Naive thymus-derived CD4-positive, alpha-beta T cell (primary cell): ENCODE measurements at regions of chr9 and their contacts with region 1.

Region 1: DNA sequence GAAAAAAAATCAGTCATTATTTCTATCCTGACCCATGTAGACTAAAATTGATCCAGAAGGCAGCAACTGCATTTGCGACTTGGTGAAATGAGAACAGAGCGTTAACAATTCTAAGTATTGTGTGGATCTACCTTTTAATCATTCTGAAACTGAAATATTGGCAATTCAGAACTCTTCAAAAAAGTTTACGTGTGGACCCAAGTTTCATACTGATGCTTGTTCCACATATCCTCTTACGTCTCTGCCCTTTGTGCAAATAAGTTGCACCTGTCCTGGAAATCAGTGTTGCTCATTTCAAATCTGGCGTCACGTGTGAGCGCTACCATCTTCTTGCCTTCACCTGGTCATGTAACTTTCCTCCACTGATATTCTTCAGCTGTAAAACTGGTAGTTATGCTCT is 74.7 kb downstream of the NTRK2 start:
- DNase-seq: no peak
- ATAC-seq: no peak
- H3K4me3 ChIP-seq: no peak overlapping the region
- H3K4me3 Mint-ChIP-seq: no peak overlapping the region
- H3K27ac ChIP-seq: no peak overlapping the region
- H3K27ac Mint-ChIP-seq: no peak overlapping the region
- H3K4me1 ChIP-seq: no peaks in the 10 kb centered on the region
- H3K4me1 Mint-ChIP-seq: no peaks in the 10 kb centered on the region
- H3K27me3 ChIP-seq: no peaks in the 10 kb centered on the region
- H3K27me3 Mint-ChIP-seq: peaks cover 0 to 6% (median 1%) of the 10 kb centered on the region in 5 donors

Region 2: DNA sequence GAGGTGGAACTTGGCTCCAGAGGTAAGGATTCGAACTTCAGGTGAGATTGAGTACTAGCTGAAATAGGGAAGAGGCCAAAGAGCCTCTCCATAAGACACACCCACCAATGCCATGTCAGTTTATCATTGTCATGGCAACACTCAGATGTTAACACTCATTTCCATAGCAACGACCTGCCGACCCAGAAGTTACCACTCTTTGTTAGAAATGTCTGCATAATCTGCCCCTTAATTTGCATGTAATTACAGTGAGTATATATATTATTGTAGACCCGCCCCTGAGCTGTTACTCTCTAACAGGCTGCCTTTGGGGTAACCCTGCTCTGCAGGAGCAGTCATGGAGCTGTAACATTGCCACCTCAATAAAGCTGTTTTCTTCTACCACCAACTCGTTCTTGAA is 84.9 kb before region 1 on chr9:
- CTCF ChIA-PET with region 1: no interaction called
- POLR2A ChIA-PET with region 1: no interaction called
- intact Hi-C with region 1: no loop called
- DNase-seq: no peak
- ATAC-seq: no peak
- H3K4me3 ChIP-seq: no peak overlapping the region
- H3K4me3 Mint-ChIP-seq: no peak overlapping the region
- H3K27ac ChIP-seq: no peak overlapping the region
- H3K27ac Mint-ChIP-seq: no peak overlapping the region
- H3K4me1 ChIP-seq: no peaks in the 10 kb centered on the region
- H3K4me1 Mint-ChIP-seq: no peaks in the 10 kb centered on the region
- H3K27me3 ChIP-seq: no peaks in the 10 kb centered on the region
- H3K27me3 Mint-ChIP-seq: peaks cover 7 to 13% (median 12%) of the 10 kb centered on the region in 5 donors

Region 3: GRCh38 chr9:84697509-84698114 is 46.6 kb before region 1 on chr9:
- CTCF ChIA-PET with region 1: no interaction called
- POLR2A ChIA-PET with region 1: no interaction called
- intact Hi-C with region 1: no loop called
- DNase-seq: peak in 2 of 9 donors; percentile 6 to 57
- ATAC-seq: no peak
- H3K4me3 ChIP-seq: no peak overlapping the region
- H3K4me3 Mint-ChIP-seq: no peak overlapping the region
- H3K27ac ChIP-seq: no peak overlapping the region
- H3K27ac Mint-ChIP-seq: no peak overlapping the region
- H3K4me1 ChIP-seq: no peaks in the 10 kb centered on the region
- H3K4me1 Mint-ChIP-seq: peaks cover 0 to 9% (median 0%) of the 10 kb centered on the region in 7 donors
- H3K27me3 ChIP-seq: no peaks in the 10 kb centered on the region
- H3K27me3 Mint-ChIP-seq: peaks cover 0 to 30% (median 19%) of the 10 kb centered on the region in 5 donors

Region 4: GRCh38 chr9:84731696-84732095 is 12.5 kb before region 1 on chr9:
- CTCF ChIA-PET with region 1: no interaction called
- POLR2A ChIA-PET with region 1: no interaction called
- intact Hi-C with region 1: loop called in 1 of 2 experiments (anchors 2 kb)
- DNase-seq: no peak
- ATAC-seq: no peak
- H3K4me3 ChIP-seq: no peak overlapping the region
- H3K4me3 Mint-ChIP-seq: no peak overlapping the region
- H3K27ac ChIP-seq: no peak overlapping the region
- H3K27ac Mint-ChIP-seq: no peak overlapping the region
- H3K4me1 ChIP-seq: no peaks in the 10 kb centered on the region
- H3K4me1 Mint-ChIP-seq: no peaks in the 10 kb centered on the region
- H3K27me3 ChIP-seq: no peaks in the 10 kb centered on the region
- H3K27me3 Mint-ChIP-seq: peaks cover 0 to 25% (median 4%) of the 10 kb centered on the region in 5 donors

Region 5: GRCh38 chr9:84761137-84761810 is 17.1 kb after region 1 on chr9:
- CTCF ChIA-PET with region 1: no interaction called
- POLR2A ChIA-PET with region 1: no interaction called
- intact Hi-C with region 1: no loop called
- DNase-seq: no peak
- ATAC-seq: no peak
- H3K4me3 ChIP-seq: no peak overlapping the region
- H3K4me3 Mint-ChIP-seq: peak overlapping the region in 1 of 10 donors; percentile 40
- H3K27ac ChIP-seq: no peak overlapping the region
- H3K27ac Mint-ChIP-seq: peak overlapping the region in 1 of 9 donors; percentile 70
- H3K4me1 ChIP-seq: no peaks in the 10 kb centered on the region
- H3K4me1 Mint-ChIP-seq: peaks cover 0 to 32% (median 0%) of the 10 kb centered on the region in 7 donors
- H3K27me3 ChIP-seq: no peaks in the 10 kb centered on the region
- H3K27me3 Mint-ChIP-seq: peaks cover 2 to 21% (median 15%) of the 10 kb centered on the region in 5 donors

Region 6: DNA sequence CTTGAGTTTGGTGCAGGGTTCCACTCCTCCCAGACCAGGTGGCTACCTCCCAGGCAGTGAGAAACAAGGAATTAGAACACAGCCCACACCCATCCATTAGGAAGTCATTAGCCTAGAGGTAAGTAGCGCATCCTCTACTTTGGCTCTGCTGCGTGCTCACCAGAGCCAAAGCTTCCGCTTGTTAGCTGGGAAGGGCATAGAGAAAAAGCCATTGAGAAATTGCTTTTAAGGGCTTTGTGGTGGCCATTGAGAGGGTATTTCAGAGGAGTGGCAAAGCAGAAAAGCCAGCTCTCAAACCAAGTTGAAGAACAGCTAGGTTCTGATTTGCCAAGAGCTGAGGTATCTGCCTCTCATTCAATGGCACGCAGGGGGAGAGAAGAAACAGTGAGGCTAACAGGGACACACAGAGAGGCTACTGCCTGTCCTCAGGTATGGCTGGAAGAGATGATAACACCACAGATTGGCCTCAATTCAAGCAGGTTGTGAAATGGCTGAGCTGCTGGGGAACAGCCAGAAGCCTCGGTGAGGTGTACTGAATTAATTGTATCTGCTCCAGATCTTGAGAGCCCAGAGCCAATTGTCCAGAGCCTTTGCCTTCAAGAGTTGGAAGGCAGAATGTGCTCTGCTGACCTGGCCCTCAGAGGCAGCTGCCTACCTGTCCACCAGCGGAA is 44.7 kb after region 1 on chr9:
- CTCF ChIA-PET with region 1: no interaction called
- POLR2A ChIA-PET with region 1: no interaction called
- intact Hi-C with region 1: no loop called
- DNase-seq: no peak
- ATAC-seq: no peak
- H3K4me3 ChIP-seq: no peak overlapping the region
- H3K4me3 Mint-ChIP-seq: no peak overlapping the region
- H3K27ac ChIP-seq: no peak overlapping the region
- H3K27ac Mint-ChIP-seq: no peak overlapping the region
- H3K4me1 ChIP-seq: no peaks in the 10 kb centered on the region
- H3K4me1 Mint-ChIP-seq: peaks cover 0 to 1% (median 0%) of the 10 kb centered on the region in 7 donors
- H3K27me3 ChIP-seq: no peaks in the 10 kb centered on the region
- H3K27me3 Mint-ChIP-seq: peaks cover 0 to 17% (median 9%) of the 10 kb centered on the region in 5 donors